ENCODE measurements at regions of chr4 and their contacts with region 1.

Region 1: DNA sequence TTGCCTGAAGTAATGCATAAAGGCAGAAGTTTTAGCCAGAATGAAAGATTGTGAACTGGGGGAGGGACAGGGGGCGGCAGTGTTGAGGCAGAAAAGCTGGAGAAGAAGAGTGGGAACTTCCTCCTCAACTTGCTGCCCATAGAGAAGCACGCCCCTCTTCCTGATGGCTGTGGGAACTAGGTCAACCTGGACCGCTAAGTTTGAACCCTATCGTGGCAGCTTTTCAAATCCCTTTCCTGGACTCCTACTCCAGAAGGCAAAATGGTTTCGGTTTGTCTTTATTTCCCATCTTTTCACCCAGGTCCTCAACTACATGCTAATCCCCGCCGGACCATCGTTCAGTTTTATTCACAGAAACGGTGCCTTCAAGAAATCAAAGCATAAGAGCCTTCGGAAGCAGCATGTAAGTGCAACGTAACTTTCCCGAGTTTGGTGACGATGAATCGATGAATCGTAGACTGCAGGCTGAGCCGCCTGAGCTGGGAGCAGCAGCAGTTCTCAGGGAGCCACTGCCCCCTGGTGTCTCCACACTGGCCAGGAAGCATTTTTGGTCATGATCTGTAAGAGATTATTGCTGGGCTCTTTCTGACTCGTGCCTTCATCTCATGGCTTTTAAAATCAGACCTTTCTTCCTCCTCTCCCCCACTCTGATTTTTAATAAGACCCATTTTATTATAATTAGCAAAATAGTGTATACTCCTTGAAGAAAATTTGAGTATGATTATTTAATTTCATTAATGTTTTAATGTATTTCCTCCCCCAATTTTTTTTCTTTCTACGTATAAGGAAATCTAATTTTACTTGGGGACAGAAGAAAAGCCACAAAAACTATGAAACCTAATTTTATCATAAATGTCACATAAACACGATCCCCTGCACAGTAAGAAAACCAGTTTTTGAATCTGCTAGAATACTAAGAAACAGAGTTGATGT is 21.4 kb downstream of the SPINK2 start:
- DNase-seq: peak; percentile 91
- ATAC-seq: peak; percentile 99
- H3K4me3 ChIP-seq: peak overlapping the region; percentile 72
- H3K27ac ChIP-seq: no peak overlapping the region
- H3K4me1 ChIP-seq: no peaks in the 10 kb centered on the region
- H3K27me3 ChIP-seq: no peaks in the 10 kb centered on the region
- CTCF ChIP-seq: peak; percentile 97

Region 2: GRCh38 chr4:56505269-56506130 is 294.6 kb before region 1 on chr4 and contains the start of gene ARL9:
- CTCF ChIA-PET with region 1: no interaction called
- POLR2A ChIA-PET with region 1: no interaction called
- intact Hi-C with region 1: loop called (anchors 5 kb)
- DNase-seq: peak; percentile 49
- ATAC-seq: peak; percentile 73
- H3K4me3 ChIP-seq: peak within 1 kb of the TSS; percentile 60
- H3K27ac ChIP-seq: no peak within 1 kb of the TSS
- H3K4me1 ChIP-seq: no peaks in the 10 kb centered on the region
- H3K27me3 ChIP-seq: no peaks in the 10 kb centered on the region
- CTCF ChIP-seq: no peak
- total RNA-seq, gene ARL9: 0.29 and 0.51 TPM in 2 replicates

Region 3: GRCh38 chr4:56575820-56576429 is 224.2 kb before region 1 on chr4:
- CTCF ChIA-PET with region 1: interaction called, 11 read pairs
- POLR2A ChIA-PET with region 1: no interaction called
- intact Hi-C with region 1: loop called (anchors 1 kb)
- DNase-seq: peak; percentile 67
- ATAC-seq: peak; percentile 83
- H3K4me3 ChIP-seq: no peak overlapping the region
- H3K27ac ChIP-seq: no peak overlapping the region
- H3K4me1 ChIP-seq: no peaks in the 10 kb centered on the region
- H3K27me3 ChIP-seq: no peaks in the 10 kb centered on the region
- CTCF ChIP-seq: peak; percentile 84

Region 4: GRCh38 chr4:56681158-56681852 is 118.8 kb before region 1 on chr4 and contains the start of gene HOPX:
- CTCF ChIA-PET with region 1: interaction called, 3 read pairs
- POLR2A ChIA-PET with region 1: no interaction called
- intact Hi-C with region 1: loop called (anchors 5 kb)
- DNase-seq: peak; percentile 86
- ATAC-seq: peak; percentile 80
- H3K4me3 ChIP-seq: peak within 1 kb of the TSS; percentile 50
- H3K27ac ChIP-seq: no peak within 1 kb of the TSS
- H3K4me1 ChIP-seq: peaks cover 24% of the 10 kb centered on the region
- H3K27me3 ChIP-seq: no peaks in the 10 kb centered on the region
- CTCF ChIP-seq: no peak
- total RNA-seq, gene HOPX: 0.87 TPM in 1 of 2 replicates, not detected in the other

Region 5: GRCh38 chr4:56768763-56769162 is 31.3 kb before region 1 on chr4:
- CTCF ChIA-PET with region 1: no interaction called
- POLR2A ChIA-PET with region 1: no interaction called
- intact Hi-C with region 1: loop called (anchors 2 kb)
- DNase-seq: no peak
- ATAC-seq: no peak
- H3K4me3 ChIP-seq: no peak overlapping the region
- H3K27ac ChIP-seq: no peak overlapping the region
- H3K4me1 ChIP-seq: no peaks in the 10 kb centered on the region
- H3K27me3 ChIP-seq: no peaks in the 10 kb centered on the region
- CTCF ChIP-seq: no peak